K562 (cell line): ENCODE measurements at regions of chr10 and their contacts with region 1.

Region 1: DNA sequence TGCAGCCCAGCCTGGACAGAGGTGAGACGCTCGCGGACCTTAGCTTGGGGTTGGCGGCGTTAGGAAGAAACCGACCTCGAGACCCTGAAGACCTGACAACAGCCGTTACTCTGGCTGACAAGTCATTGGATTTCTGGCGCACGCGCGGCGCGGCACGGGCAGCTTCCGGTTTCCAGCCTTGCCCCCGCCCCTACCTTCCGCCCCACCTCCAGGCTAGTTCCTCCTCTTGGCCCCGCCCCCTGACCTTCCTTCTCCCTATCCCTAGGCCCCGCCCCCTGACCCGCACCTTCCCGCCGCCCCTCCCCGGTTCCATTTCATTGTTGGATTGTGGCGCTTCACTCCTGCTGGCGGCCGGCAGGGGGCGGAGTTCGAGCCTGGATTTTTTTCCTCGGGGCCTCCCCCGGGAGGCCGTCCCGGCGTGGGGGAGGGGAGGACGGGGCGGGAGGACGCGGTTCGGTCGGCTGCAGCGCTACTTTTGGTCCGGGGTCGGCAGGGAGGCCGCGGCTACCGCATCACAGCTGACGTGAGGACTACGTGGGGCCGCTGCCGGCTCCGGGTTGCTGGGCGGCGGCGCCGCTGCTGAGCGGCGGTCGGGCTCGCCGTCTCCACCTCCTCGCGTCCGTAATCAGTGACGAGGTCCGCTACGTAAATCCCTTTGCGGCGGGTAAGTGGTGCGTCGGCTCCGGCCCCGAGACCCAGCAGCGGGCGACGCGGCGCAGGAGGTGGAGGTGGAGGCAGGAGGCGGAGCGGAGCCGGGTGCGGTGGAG is at the start of gene CREM:
- DNase-seq: peak; percentile 97 to 98 (median 98)
- ATAC-seq: peak; percentile 84
- H3K4me3 ChIP-seq: peak within 1 kb of the TSS; percentile 95
- H3K27ac ChIP-seq: peak within 1 kb of the TSS; percentile 99
- H3K4me1 ChIP-seq: peaks cover 15 to 22% of the 10 kb centered on the region in 2 experiments
- H3K27me3 ChIP-seq: no peaks in the 10 kb centered on the region
- CTCF ChIP-seq: peak; percentile 55 to 89 (median 82); a peak in 5 of 6 replicates
- EP300 ChIP-seq: no peak
- POLR2A ChIP-seq: peak; percentile 93
- RAD21 ChIP-seq: peak; percentile 62 to 78
- polyA plus RNA-seq, gene CREM: 47.0 to 48.3 TPM

Region 2: DNA sequence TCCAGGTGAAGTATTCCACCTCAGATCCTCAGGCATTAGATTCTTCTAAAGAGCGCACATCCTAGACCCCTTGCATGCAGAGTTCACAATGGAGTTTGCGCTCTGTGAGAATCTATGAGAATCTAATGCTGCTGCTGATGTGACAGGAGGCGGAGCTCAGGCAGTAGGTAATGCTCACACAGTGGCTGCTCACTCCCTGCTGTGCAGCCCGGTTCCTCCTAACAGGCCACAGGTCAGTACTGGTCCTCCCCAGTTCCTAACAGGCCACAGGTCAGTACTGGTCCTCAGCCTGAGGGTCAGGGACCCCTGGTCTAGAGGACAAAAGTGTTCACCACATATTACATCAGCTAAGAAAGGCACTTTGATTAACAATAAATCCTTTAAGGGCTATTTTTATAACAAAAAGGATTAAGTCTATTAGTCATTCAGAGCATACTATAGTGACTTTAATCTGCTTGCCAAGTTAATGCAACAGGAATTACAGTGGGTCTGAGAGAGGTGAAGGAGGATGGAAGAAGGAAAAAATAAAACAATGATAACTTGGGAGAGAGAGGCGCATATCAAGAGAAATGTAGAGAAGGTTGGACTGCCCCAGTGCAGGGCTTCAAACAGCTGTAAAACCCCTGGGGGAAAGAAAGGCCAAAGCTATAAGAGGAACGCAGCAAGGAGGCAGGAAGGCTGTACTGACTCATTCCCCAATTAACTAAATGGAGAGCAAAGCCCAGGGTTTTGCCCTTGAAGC is 85.8 kb before region 1 on chr10:
- CTCF ChIA-PET with region 1: no interaction called
- POLR2A ChIA-PET with region 1: no interaction called
- in situ Hi-C with region 1: no loop called
- intact Hi-C with region 1: no loop called
- DNase-seq: no peak
- ATAC-seq: peak; percentile 33; the same call in 2 of the 3 replicates
- H3K4me3 ChIP-seq: no peak overlapping the region
- H3K27ac ChIP-seq: no peak overlapping the region
- H3K4me1 ChIP-seq: peaks cover 3 to 10% of the 10 kb centered on the region in 2 experiments; a peak in 3 of 5 replicates
- H3K27me3 ChIP-seq: no peaks in the 10 kb centered on the region
- CTCF ChIP-seq: no peak
- EP300 ChIP-seq: no peak
- POLR2A ChIP-seq: no peak
- RAD21 ChIP-seq: no peak

Region 3: DNA sequence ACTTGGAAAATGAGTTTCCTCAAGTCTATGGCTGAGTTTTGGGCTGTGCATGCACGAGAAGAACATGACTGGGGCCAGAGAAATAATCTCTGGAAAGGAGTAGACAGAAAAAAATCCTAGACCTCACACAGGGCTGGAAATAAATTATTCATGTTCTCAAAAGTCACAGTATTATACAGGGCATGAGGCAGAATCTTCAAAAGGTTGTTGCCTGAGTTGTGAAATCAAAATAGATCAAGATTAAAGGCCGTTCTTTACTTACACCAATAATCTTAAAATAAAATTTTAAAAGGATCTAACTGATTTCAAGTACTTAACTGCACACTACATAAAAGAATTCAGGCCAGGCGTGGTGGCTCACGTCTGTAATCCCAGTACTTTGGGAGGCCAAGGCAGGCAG is 14.1 kb before region 1 on chr10:
- CTCF ChIA-PET with region 1: no interaction called
- POLR2A ChIA-PET with region 1: interaction called, 10 read pairs
- in situ Hi-C with region 1: no loop called
- intact Hi-C with region 1: no loop called
- DNase-seq: no peak
- ATAC-seq: no peak
- H3K4me3 ChIP-seq: no peak overlapping the region
- H3K27ac ChIP-seq: no peak overlapping the region
- H3K4me1 ChIP-seq: no peaks in the 10 kb centered on the region
- H3K27me3 ChIP-seq: no peaks in the 10 kb centered on the region
- CTCF ChIP-seq: no peak
- EP300 ChIP-seq: no peak
- POLR2A ChIP-seq: no peak
- RAD21 ChIP-seq: no peak

Region 4: GRCh38 chr10:35184527-35185171 is 57.9 kb after region 1 on chr10:
- CTCF ChIA-PET with region 1: no interaction called
- POLR2A ChIA-PET with region 1: no interaction called
- in situ Hi-C with region 1: no loop called
- intact Hi-C with region 1: no loop called
- DNase-seq: no peak
- ATAC-seq: no peak
- H3K4me3 ChIP-seq: no peak overlapping the region
- H3K27ac ChIP-seq: no peak overlapping the region
- H3K4me1 ChIP-seq: no peaks in the 10 kb centered on the region
- H3K27me3 ChIP-seq: no peaks in the 10 kb centered on the region
- CTCF ChIP-seq: no peak
- EP300 ChIP-seq: no peak
- POLR2A ChIP-seq: no peak
- RAD21 ChIP-seq: no peak

Region 5: GRCh38 chr10:35218339-35218955 is 91.7 kb after region 1 on chr10:
- CTCF ChIA-PET with region 1: interaction called, 5 read pairs
- POLR2A ChIA-PET with region 1: interaction called, 7 read pairs
- in situ Hi-C with region 1: loop called (anchors 5 kb)
- intact Hi-C with region 1: loop called (anchors 1 kb)
- DNase-seq: peak; percentile 43 to 90 (median 58)
- ATAC-seq: peak; percentile 87
- H3K4me3 ChIP-seq: no peak overlapping the region
- H3K27ac ChIP-seq: no peak overlapping the region
- H3K4me1 ChIP-seq: peaks cover 0 to 4% of the 10 kb centered on the region in 2 experiments; a peak in 1 of 5 replicates
- H3K27me3 ChIP-seq: no peaks in the 10 kb centered on the region
- CTCF ChIP-seq: peak; percentile 77 to 91 (median 81)
- EP300 ChIP-seq: no peak
- POLR2A ChIP-seq: no peak
- RAD21 ChIP-seq: peak; percentile 86 to 92

Region 6: GRCh38 chr10:35271086-35271858 is 144.6 kb after region 1 on chr10:
- CTCF ChIA-PET with region 1: no interaction called
- POLR2A ChIA-PET with region 1: no interaction called
- in situ Hi-C with region 1: no loop called
- intact Hi-C with region 1: no loop called
- DNase-seq: no peak
- ATAC-seq: no peak
- H3K4me3 ChIP-seq: no peak overlapping the region
- H3K27ac ChIP-seq: no peak overlapping the region
- H3K4me1 ChIP-seq: peaks cover 9 to 16% of the 10 kb centered on the region in 2 experiments
- H3K27me3 ChIP-seq: no peaks in the 10 kb centered on the region
- CTCF ChIP-seq: no peak
- EP300 ChIP-seq: no peak
- POLR2A ChIP-seq: no peak
- RAD21 ChIP-seq: no peak

Region 7: GRCh38 chr10:35607475-35608327 is 481.0 kb after region 1 on chr10:
- CTCF ChIA-PET with region 1: no interaction called
- POLR2A ChIA-PET with region 1: no interaction called
- in situ Hi-C with region 1: no loop called
- intact Hi-C with region 1: loop called (anchors 10 kb)
- DNase-seq: no peak
- ATAC-seq: no peak; the same call in 2 of the 3 replicates
- H3K4me3 ChIP-seq: no peak overlapping the region
- H3K27ac ChIP-seq: no peak overlapping the region
- H3K4me1 ChIP-seq: peaks cover 4 to 11% of the 10 kb centered on the region in 2 experiments; a peak in 3 of 5 replicates
- H3K27me3 ChIP-seq: peaks cover 8 to 40% of the 10 kb centered on the region in 2 experiments
- CTCF ChIP-seq: no peak
- EP300 ChIP-seq: no peak
- POLR2A ChIP-seq: no peak
- RAD21 ChIP-seq: no peak